ENCODE measurements at regions of chr12 and their contacts with region 1.

Region 1: DNA sequence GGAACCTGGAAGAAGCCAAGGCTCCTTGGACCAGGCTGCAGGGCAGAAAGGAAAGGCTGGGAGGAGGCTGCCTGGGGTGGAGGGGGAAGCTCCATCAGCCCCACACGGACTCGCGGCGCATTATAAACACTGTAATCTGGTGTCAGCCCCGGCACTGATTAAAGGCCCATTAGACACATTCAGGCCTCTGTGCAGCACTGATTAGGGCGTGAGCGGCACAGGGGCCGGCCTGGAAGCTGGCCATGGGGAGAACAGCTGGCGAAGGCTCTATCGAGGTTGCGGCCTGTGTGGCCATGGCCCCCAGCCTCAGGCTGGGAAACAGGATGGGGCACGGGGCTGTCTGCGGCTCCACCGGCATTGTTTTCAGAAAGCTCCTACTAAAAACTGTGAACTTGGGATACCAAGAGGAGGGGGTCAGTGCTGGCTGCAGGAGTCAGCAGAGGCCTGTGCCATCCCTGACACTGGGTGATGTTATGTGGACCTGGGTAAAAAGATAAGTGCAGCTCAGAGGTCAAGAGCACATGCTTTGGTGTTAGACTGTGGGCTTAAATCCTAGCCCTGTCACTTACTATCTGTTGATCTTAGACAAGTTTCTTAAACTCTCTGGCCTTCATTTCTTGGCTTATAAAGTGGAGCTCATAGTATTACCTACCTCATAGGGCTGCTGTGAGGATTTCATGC is 10.6 kb downstream of the ACVRL1 start:
- DNase-seq: peak in 1 of 2 donors; percentile 72
- H3K4me3 ChIP-seq: no peak overlapping the region
- CTCF ChIP-seq: no peak
- POLR2A ChIP-seq: no peak

Region 2: DNA sequence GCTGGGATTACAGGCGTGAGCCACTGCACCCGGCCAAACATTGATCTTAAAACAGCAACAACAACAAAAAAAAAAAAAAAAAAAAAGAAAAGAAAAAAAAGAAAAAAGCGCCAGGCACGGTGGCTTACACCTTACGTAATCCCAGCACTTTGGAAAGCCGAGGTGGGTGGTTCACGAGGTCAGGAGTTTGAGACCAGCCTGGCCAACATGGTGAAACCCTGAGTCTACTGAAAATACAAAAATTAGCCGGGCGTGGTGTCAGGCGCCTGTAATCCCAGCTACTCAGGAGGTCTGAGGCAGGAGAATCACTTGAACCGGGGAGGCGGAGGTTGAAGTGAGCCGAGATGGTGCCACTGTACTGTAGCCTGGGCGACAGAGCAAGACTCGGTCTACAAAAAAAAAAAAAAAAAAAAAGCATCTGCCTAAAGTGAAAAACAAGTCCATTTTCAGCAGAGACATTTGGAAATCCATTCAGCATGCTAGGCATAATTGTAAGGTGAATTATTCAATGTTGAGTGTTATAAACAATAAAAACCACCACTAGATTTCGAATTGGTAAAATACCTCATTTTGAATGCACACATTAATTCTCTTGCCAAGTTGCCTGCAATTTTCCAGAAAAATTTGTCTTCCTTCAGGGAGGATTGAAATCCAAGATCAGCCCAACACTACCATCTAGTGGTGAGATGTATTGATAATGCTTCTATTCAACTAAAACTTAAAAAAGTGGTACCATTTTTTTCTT is 1742.8 kb before region 1 on chr12:
- intact Hi-C with region 1: loop called (anchors 5 kb)
- DNase-seq: peak in 1 of 2 donors; percentile 34
- H3K4me3 ChIP-seq: no peak overlapping the region
- CTCF ChIP-seq: peak in 1 of 3 donors; percentile 30
- POLR2A ChIP-seq: no peak

Region 3: DNA sequence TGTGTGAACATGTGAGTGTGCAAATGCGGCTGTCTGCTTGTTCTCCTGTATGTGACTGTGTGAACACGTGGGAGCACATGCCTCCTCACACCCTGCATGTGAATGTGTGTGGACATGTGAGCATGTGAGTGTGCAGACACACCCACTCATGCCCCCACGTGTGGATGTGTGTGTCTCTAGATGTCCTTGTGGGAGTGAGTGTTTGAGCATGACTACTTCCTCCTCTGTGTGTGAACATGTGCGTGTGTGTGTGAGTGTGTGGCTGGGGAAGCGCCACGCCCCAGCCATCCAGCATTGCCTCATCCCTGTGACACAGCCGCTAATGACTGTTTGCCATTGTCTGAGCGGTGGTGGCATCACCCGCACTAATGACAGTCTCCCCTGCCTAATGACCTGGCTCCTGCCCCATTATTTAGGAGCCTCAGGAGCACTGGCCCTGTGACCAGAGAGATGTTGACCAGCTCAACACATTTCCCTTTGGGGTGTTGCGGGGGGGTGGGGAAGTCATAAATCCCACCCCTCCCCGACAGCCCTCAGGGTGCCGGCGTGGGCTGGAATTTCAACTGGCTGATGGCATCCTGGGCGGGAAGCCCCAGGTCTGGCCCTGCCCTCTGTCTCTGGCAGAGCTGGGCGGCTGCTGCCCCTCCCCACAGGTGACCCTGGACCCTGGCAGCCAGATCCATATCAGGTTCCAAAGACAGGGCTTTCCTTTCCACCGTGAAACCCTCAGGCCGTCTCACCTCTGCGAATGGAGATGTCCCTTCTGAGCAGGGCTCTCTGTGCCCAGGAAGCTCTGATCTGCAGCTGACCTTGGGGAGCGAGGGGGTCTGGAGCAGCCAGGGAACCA is 285.4 kb after region 1 on chr12:
- intact Hi-C with region 1: no loop called
- DNase-seq: peak; percentile 76 to 96
- H3K4me3 ChIP-seq: no peak overlapping the region
- CTCF ChIP-seq: no peak
- POLR2A ChIP-seq: no peak

Measured in lower leg skin (tissue), 4 donors.